ENCODE measurements at regions of chr3 and their contacts with region 1.

Region 1: DNA sequence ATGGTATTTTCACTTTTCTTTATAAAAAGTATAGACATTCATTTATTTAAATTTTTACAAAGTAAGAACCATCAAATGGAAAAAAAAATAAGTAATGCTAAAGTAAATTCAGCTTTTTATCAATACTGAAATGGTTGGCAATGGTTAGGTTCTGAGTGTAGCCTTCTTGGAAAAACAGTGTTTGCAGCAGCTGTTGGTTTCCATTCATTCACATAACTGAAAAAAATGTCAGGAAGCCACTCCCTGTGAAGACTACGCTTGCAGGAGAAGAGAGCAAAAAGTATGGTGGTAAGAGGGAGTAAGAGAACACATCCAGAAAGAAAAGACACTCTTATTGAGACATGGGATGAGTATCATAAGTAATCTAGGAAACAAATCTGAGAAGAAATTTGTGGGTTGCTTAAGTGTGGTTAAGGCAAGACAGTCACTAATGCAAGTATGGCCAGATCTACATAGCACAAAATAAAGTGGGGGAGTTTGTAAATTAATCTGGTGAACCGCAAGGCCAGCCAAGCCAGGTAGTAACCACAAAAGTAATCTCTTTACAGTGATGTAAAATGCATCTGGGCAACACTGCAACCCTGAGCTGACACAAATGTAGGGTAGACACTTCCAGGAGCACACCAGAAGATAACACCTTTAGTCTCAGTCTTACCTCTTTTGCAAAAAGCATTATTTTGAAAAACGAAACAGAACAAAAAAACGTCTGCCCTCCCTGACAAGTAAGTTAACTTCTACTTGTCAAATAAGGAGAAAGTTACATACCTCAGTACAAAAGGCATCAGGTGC is 133.7 kb downstream of the IGSF11 start:
- DNase-seq: no peak
- ATAC-seq: no peak
- H3K4me3 ChIP-seq: no peak overlapping the region
- H3K27ac ChIP-seq: no peak overlapping the region
- H3K4me1 ChIP-seq: no peaks in the 10 kb centered on the region
- H3K27me3 ChIP-seq: no peaks in the 10 kb centered on the region
- CTCF ChIP-seq: no peak
- EP300 ChIP-seq: no peak
- POLR2A ChIP-seq: no peak
- RAD21 ChIP-seq: no peak

Region 2: DNA sequence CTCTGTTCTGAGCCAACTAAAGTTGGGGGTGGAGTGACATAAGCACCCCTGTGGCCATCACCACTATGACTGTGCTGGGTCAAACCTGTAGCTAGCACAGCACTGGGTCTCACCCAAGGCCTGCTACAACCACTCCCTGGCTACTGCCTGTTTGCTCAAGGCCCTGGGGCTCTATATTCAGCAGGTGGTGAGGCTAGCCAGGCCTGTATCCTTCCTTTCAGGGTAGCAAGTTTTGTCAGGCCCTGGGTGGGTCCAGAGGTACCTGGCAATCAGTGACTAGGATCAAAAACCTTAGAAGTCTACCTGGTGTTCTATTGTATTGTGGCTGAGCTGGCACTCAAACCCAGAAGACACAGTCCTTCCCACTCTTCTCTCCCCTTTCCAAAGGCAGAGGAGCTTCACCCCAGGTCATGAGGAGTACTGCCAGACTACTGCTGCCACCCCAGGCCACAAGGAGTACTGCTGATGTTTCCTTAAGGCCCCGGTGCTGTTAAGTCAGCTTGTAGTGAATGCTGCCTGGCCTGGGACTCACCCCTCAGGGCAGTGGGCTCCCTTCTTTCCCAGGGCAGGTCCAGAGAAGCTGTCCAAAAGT is 37.1 kb before region 1 on chr3:
- CTCF ChIA-PET with region 1: no interaction called
- POLR2A ChIA-PET with region 1: no interaction called
- in situ Hi-C with region 1: no loop called
- intact Hi-C with region 1: loop called (anchors 1 kb)
- DNase-seq: peak; percentile 16
- ATAC-seq: peak; percentile 98
- H3K4me3 ChIP-seq: no peak overlapping the region
- H3K27ac ChIP-seq: no peak overlapping the region
- H3K4me1 ChIP-seq: no peaks in the 10 kb centered on the region
- H3K27me3 ChIP-seq: no peaks in the 10 kb centered on the region
- CTCF ChIP-seq: peak; percentile 43; the same call in 1 of the 2 replicates
- EP300 ChIP-seq: no peak
- POLR2A ChIP-seq: no peak
- RAD21 ChIP-seq: no peak

Region 3: GRCh38 chr3:118884748-118885206 is 16.2 kb before region 1 on chr3:
- CTCF ChIA-PET with region 1: no interaction called
- POLR2A ChIA-PET with region 1: no interaction called
- in situ Hi-C with region 1: no loop called
- intact Hi-C with region 1: no loop called
- DNase-seq: peak; percentile 18
- ATAC-seq: peak; percentile 96
- H3K4me3 ChIP-seq: no peak overlapping the region
- H3K27ac ChIP-seq: no peak overlapping the region
- H3K4me1 ChIP-seq: no peaks in the 10 kb centered on the region
- H3K27me3 ChIP-seq: peaks cover 0 to 4% of the 10 kb centered on the region in 2 experiments; a peak in 1 of 5 replicates
- CTCF ChIP-seq: peak; percentile 72
- EP300 ChIP-seq: no peak
- POLR2A ChIP-seq: no peak
- RAD21 ChIP-seq: no peak

Region 4: DNA sequence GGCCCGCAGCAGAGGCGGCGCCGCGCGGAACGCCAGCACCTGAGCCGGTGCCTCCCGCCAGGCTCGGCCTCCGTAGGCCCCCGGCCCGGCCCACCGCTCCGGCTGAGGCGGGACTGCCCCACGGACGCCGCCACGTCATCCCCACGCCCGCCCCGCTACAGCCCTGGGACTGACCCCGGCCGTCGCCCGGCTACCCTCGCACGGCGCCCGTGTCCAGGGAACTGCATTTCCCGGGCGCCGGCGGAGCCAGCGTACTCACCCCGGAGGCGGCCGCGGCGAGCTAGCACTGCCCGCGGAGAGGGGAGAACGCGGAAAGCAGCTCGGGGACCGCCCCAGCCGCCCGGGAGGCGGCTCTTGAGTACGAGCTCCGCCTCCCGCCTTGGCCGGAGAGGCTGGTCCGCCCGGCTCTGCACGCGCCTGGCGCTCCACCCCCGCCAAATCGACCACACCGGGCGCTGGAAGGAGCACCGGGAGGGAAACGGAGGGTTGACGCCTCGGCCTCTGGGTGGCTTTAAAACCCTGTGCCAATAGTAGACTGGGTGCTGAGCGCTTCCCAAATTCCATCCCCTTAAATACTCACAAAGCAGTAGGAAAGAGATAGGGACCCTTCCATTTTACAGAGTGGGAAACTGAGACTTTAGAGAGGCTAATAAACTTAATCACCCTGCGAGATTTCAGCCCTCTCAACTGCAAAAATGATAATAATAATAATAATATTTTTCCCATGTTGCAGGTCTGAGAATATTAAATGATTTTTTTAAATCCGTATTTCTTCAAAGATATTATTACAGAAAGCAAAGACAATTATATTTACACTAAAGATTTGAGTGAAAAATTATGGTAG is 339.9 kb after region 1 on chr3 and contains the start of gene B4GALT4:
- CTCF ChIA-PET with region 1: no interaction called
- POLR2A ChIA-PET with region 1: no interaction called
- in situ Hi-C with region 1: no loop called
- intact Hi-C with region 1: no loop called
- DNase-seq: peak; percentile 73
- ATAC-seq: peak; percentile 95
- H3K4me3 ChIP-seq: peak within 1 kb of the TSS; percentile 72 to 85 (median 82)
- H3K27ac ChIP-seq: peak within 1 kb of the TSS; percentile 98
- H3K4me1 ChIP-seq: peaks cover 20% of the 10 kb centered on the region
- H3K27me3 ChIP-seq: no peaks in the 10 kb centered on the region
- CTCF ChIP-seq: 0 out of 2 replicates have a peak, but pooled peaks have one; percentile 16
- EP300 ChIP-seq: no peak
- POLR2A ChIP-seq: peak; percentile 80 to 85
- RAD21 ChIP-seq: peak; percentile 46; the same call in 1 of the 2 replicates
- total RNA-seq, gene B4GALT4: 23.8 and 29.0 TPM in 2 replicates